Heart left ventricle (tissue), 16 donors: ENCODE measurements at regions of chr1 and their contacts with region 1.

Region 1: DNA sequence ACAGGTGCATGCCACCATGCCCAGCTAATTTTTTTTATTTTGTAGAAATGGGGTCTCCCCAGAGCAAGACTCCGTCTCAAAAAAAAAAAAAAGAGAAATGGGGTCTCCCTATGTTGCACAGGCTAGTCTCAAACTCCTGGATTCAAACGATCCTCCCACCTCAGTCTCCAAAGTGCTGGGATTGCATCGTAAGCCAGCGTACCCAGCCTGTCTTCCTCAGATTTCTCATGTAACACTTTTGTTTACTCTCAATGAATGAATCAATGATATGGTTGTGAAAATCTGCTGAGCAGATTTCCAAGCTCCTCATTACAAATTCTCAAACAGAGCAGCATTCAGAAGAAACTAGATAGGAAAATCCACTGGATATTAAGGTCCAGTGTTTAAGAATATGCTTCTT is 6.6 kb downstream of the CMPK1 start:
- DNase-seq: no peak
- ATAC-seq: no peak
- H3K4me3 ChIP-seq: no peak overlapping the region
- H3K27ac ChIP-seq: no peak overlapping the region
- H3K4me1 ChIP-seq: peaks cover 0 to 25% (median 13%) of the 10 kb centered on the region in 12 donors
- H3K27me3 ChIP-seq: no peaks in the 10 kb centered on the region
- CTCF ChIP-seq: no peak
- POLR2A ChIP-seq: no peak

Region 2: DNA sequence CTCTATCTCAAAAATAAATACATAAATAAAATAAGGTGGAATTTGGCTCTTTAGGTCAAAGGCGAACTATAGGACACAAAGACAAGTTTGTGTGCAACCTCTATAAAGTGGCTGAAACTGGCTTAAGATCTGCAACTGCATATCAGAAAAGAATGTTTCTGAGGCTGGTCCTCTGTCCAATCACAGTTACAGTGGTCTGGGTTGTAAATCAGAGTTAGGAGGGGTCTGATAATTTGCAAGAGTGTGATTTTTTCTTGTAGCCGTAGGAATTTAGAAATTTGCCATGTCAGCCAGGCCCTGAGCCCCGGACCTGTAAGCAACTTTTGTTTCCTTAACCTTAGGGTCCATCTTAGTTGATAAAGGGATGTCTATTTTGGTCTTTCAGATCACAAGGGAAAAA is 21.2 kb after region 1 on chr1:
- intact Hi-C with region 1: loop called in 1 of 10 experiments (anchors 2 kb)
- DNase-seq: no peak
- ATAC-seq: no peak
- H3K4me3 ChIP-seq: no peak overlapping the region
- H3K27ac ChIP-seq: no peak overlapping the region
- H3K4me1 ChIP-seq: peaks cover 0 to 30% (median 3%) of the 10 kb centered on the region in 12 donors
- H3K27me3 ChIP-seq: no peaks in the 10 kb centered on the region
- CTCF ChIP-seq: no peak
- POLR2A ChIP-seq: no peak